H1 (cell line): ENCODE measurements at regions of chr11 and their contacts with region 1.

Region 1: GRCh38 chr11:66222358-66223149 is 45.9 kb upstream of the RAB1B start:
- DNase-seq: peak; percentile 93 to 95
- H3K4me3 ChIP-seq: no peak overlapping the region
- H3K27ac ChIP-seq: 0 out of 2 replicates have a peak overlapping the region, but pooled peaks have one; percentile 47
- H3K4me1 ChIP-seq: peaks cover 0 to 2% (median 0%) of the 10 kb centered on the region in 4 experiments; a peak in 1 of 7 replicates
- H3K27me3 ChIP-seq: no peaks in the 10 kb centered on the region
- CTCF ChIP-seq: peak; percentile 100
- EP300 ChIP-seq: 0 out of 3 replicates have a peak, but pooled peaks of 1 of the 2 experiments have one; percentile 4
- POLR2A ChIP-seq: no peak
- RAD21 ChIP-seq: peak; percentile 95 to 97

Region 2: GRCh38 chr11:66130971-66131370 is 91.6 kb before region 1 on chr11:
- CTCF ChIA-PET with region 1: no interaction called
- POLR2A ChIA-PET with region 1: no interaction called
- DNase-seq: no peak
- H3K4me3 ChIP-seq: no peak overlapping the region
- H3K27ac ChIP-seq: no peak overlapping the region
- H3K4me1 ChIP-seq: peaks cover 3 to 20% (median 10%) of the 10 kb centered on the region in 4 experiments; a peak in 6 of 7 replicates
- H3K27me3 ChIP-seq: no peaks in the 10 kb centered on the region
- CTCF ChIP-seq: no peak
- EP300 ChIP-seq: no peak
- POLR2A ChIP-seq: no peak
- RAD21 ChIP-seq: no peak

Region 3: GRCh38 chr11:66207876-66208275 is 14.7 kb before region 1 on chr11:
- CTCF ChIA-PET with region 1: interaction called, 12 read pairs
- POLR2A ChIA-PET with region 1: interaction called, 4 read pairs
- DNase-seq: no peak
- H3K4me3 ChIP-seq: no peak overlapping the region
- H3K27ac ChIP-seq: no peak overlapping the region
- H3K4me1 ChIP-seq: no peaks in the 10 kb centered on the region
- H3K27me3 ChIP-seq: no peaks in the 10 kb centered on the region
- CTCF ChIP-seq: no peak
- EP300 ChIP-seq: no peak
- POLR2A ChIP-seq: no peak
- RAD21 ChIP-seq: no peak

Region 4: DNA sequence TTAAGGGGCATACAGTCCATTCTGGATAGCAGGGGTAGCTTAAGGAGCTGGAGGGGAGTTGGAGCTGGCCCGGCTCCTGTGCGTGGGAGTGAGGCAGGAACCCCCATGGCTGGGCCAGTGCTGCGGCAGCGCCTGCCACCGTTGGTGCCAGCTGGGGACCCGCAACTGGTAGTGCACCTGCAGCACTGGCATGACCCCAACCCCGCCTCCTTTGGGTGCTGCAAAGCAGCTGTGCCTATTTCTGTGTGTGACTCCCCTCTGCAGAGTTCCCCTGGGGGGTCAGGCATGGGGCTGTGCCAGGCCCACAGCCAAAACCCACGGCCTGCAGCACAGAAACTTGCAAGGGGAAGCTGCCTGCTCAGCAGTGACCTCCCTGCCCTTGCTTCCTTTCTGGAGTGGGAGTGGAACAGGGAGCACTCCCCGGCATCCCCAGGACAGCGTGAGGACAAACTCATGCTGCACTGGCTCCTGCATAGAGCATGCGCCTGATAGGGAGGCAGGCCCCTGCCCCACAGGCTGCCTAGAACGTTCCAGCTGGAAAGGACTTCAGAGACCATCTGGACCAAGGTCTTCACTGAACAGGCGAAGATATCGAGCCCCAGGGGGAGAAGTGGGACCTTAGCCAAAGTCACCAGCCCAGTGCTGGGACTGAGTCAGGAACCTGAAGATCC is 19.7 kb after region 1 on chr11:
- CTCF ChIA-PET with region 1: interaction called, 123 read pairs
- POLR2A ChIA-PET with region 1: interaction called, 10 read pairs
- DNase-seq: no peak
- H3K4me3 ChIP-seq: no peak overlapping the region
- H3K27ac ChIP-seq: no peak overlapping the region
- H3K4me1 ChIP-seq: no peaks in the 10 kb centered on the region
- H3K27me3 ChIP-seq: no peaks in the 10 kb centered on the region
- CTCF ChIP-seq: no peak
- EP300 ChIP-seq: no peak
- POLR2A ChIP-seq: no peak
- RAD21 ChIP-seq: no peak

Region 5: GRCh38 chr11:66251809-66252208 is 29.3 kb after region 1 on chr11:
- CTCF ChIA-PET with region 1: interaction called, 13 read pairs
- POLR2A ChIA-PET with region 1: interaction called, 3 read pairs
- DNase-seq: no peak
- H3K4me3 ChIP-seq: no peak overlapping the region
- H3K27ac ChIP-seq: no peak overlapping the region
- H3K4me1 ChIP-seq: peaks cover 0 to 3% (median 1%) of the 10 kb centered on the region in 4 experiments; a peak in 4 of 7 replicates
- H3K27me3 ChIP-seq: peaks cover 0 to 3% (median 0%) of the 10 kb centered on the region in 4 experiments; a peak in 1 of 7 replicates
- CTCF ChIP-seq: no peak
- EP300 ChIP-seq: no peak
- POLR2A ChIP-seq: no peak
- RAD21 ChIP-seq: no peak

Region 6: DNA sequence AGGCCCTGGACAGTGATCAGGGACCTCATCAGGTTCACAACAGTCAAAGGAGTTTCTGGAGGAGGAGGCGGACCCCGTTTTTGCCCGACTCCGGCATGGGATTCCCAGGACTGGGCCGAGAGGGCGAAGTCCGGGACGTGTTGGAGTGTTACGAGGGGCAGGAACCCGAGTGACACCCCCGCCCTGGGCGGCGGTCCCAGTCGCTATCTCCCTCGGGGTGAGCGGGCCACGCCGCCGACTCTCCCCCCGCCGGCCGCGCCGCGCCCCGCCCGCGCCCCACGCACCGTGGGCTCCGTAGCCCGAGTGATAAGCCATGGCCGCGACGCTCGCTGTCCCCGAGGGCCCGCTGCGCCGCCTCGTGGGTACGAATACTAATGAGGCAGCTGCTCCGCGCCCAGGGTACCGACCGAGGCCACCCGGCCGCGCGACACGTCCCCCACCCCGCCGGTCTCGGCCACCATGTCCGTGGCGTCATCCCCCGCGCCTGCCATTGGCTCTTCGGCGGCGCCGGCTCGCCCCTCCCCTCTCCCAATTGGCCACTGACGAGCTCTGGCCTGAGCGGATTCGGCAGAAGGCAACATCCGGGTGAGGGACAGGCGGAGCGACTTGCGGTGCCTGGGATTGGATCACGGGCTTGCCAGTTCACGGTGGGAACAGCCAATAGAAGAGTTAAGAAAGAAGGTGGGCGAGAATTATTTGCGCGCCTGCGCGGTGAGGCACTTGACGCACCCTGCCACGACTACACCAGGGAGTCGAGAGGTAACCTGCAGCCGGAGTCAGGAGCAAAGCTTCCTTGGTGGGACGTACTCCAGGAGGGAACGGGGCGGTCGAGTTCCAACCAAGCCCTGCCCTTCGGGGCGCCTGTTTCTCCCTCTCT is 66.4 kb after region 1 on chr11 and contains the start of gene YIF1A:
- CTCF ChIA-PET with region 1: interaction called, 23 read pairs
- POLR2A ChIA-PET with region 1: no interaction called
- DNase-seq: peak; percentile 95 to 98
- H3K4me3 ChIP-seq: peak within 1 kb of the TSS; percentile 76 to 94 (median 92)
- H3K27ac ChIP-seq: peak within 1 kb of the TSS; percentile 55
- H3K4me1 ChIP-seq: peaks cover 0 to 21% (median 6%) of the 10 kb centered on the region in 4 experiments; a peak in 5 of 7 replicates
- H3K27me3 ChIP-seq: peaks cover 2 to 27% (median 18%) of the 10 kb centered on the region in 4 experiments
- CTCF ChIP-seq: no peak
- EP300 ChIP-seq: no peak
- POLR2A ChIP-seq: peak in 1 of 2 experiments; percentile 72; a peak in 2 of 3 replicates
- RAD21 ChIP-seq: no peak
- total RNA-seq, gene YIF1A: 70.1 and 75.9 TPM in 2 replicates